HEK293 (cell line): ENCODE measurements at regions of chr15 and their contacts with region 1.

Region 1: DNA sequence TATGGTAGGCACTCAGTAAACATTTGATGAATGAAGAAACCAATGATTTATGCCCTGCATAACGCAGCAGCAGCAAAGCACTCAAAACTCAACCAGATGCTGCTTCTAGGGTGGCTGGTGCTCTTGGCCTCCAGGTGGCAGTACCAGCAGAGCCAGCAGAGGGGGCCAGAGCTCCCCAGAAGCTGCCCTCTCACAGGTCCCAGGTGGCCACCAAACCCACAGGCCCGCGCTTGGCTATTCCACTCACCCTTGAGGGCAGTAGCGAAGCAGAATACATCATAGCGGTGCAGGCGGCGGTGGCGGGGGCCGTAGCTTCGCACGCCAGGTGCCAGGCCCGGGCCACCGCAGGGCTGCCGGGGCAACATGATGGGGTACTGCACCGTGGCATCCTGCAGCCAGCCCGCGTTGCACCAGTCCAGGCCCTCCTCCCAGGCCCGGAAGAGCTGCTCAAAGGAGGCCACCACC is 16.6 kb downstream of the HAPLN3 start:
- H3K4me3 ChIP-seq: no peak overlapping the region
- H3K27ac ChIP-seq: no peak overlapping the region
- H3K4me1 ChIP-seq: no peaks in the 10 kb centered on the region
- CTCF ChIP-seq: peak; percentile 91

Region 2: GRCh38 chr15:88695101-88695500 is 183.7 kb before region 1 on chr15:
- CTCF ChIA-PET with region 1: no interaction called
- POLR2A ChIA-PET with region 1: no interaction called
- H3K4me3 ChIP-seq: no peak overlapping the region
- H3K27ac ChIP-seq: no peak overlapping the region
- H3K4me1 ChIP-seq: no peaks in the 10 kb centered on the region
- CTCF ChIP-seq: no peak

Region 3: GRCh38 chr15:88764448-88764847 is 114.3 kb before region 1 on chr15:
- CTCF ChIA-PET with region 1: no interaction called
- POLR2A ChIA-PET with region 1: no interaction called
- H3K4me3 ChIP-seq: no peak overlapping the region
- H3K27ac ChIP-seq: no peak overlapping the region
- H3K4me1 ChIP-seq: no peaks in the 10 kb centered on the region
- CTCF ChIP-seq: no peak

Region 4: GRCh38 chr15:88814393-88814792 is 64.4 kb before region 1 on chr15:
- CTCF ChIA-PET with region 1: interaction called, 12 read pairs
- POLR2A ChIA-PET with region 1: no interaction called
- H3K4me3 ChIP-seq: no peak overlapping the region
- H3K27ac ChIP-seq: no peak overlapping the region
- H3K4me1 ChIP-seq: no peaks in the 10 kb centered on the region
- CTCF ChIP-seq: no peak

Region 5: GRCh38 chr15:88828791-88829190 is 50.0 kb before region 1 on chr15:
- CTCF ChIA-PET with region 1: no interaction called
- POLR2A ChIA-PET with region 1: no interaction called
- H3K4me3 ChIP-seq: no peak overlapping the region
- H3K27ac ChIP-seq: no peak overlapping the region
- H3K4me1 ChIP-seq: no peaks in the 10 kb centered on the region
- CTCF ChIP-seq: no peak

Region 6: GRCh38 chr15:88860212-88860611 is 18.5 kb before region 1 on chr15:
- CTCF ChIA-PET with region 1: interaction called, 30 read pairs
- POLR2A ChIA-PET with region 1: no interaction called
- H3K4me3 ChIP-seq: no peak overlapping the region
- H3K27ac ChIP-seq: no peak overlapping the region
- H3K4me1 ChIP-seq: no peaks in the 10 kb centered on the region
- CTCF ChIP-seq: no peak

Region 7: GRCh38 chr15:88866295-88866881 is 12.4 kb before region 1 on chr15:
- CTCF ChIA-PET with region 1: interaction called, 30 read pairs
- POLR2A ChIA-PET with region 1: no interaction called
- H3K4me3 ChIP-seq: no peak overlapping the region
- H3K27ac ChIP-seq: no peak overlapping the region
- H3K4me1 ChIP-seq: no peaks in the 10 kb centered on the region
- CTCF ChIP-seq: no peak